ENCODE measurements at regions of chr15 and their contacts with region 1.

Region 1: DNA sequence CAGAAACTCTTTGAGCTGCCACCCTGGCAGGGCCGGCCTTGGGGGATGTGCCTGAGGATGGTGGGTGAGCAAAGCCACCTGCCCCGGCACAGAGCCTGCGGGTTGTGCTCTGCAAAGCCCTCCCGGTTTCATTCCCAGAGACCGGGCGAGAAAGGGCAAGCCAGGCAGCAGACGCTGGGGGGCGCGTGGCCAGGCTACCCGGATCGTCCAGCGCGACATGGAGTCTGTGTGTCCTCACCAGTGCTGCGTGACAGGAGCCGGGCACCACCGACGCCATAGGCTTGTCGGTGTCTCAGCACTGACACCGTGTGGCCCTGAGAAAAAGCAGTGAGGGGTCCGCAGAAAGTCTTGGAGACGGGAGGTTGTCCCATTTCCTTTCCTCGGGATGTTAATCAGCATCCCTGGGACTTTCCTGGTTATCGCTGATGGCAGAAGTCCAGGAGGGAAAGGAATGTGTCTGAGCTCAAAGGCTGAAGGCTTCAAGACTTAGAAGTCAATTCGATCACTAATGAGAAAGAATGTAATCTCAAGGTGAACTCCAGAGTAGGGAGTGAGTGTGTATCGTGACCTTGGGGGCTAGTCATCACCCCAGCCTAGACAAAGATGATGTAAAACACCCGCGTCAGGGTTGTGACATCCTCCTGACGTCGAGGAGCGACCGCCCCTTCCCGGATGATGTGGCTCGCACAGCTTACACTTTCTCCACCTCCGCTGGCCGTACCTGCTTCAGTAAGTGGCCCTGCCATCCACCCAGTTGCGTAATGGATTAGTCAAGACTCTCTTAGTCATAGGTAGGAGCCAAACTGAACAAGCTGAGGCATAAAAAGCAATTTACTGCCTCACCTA is 36.3 kb upstream of the PLA2G4E start:
- DNase-seq: peak; percentile 77 to 90
- H3K4me3 ChIP-seq: peak overlapping the region; percentile 4 to 50 (median 26); a peak in 5 of 8 replicates
- H3K27ac ChIP-seq: no peak overlapping the region
- H3K4me1 ChIP-seq: no peaks in the 10 kb centered on the region
- H3K27me3 ChIP-seq: no peaks in the 10 kb centered on the region; a peak in 1 of 7 replicates
- CTCF ChIP-seq: peak; percentile 59 to 88 (median 85)
- EP300 ChIP-seq: peak in 1 of 2 experiments; percentile 37; a peak in 1 of 3 replicates
- POLR2A ChIP-seq: no peak
- RAD21 ChIP-seq: peak; percentile 74 to 82

Region 2: DNA sequence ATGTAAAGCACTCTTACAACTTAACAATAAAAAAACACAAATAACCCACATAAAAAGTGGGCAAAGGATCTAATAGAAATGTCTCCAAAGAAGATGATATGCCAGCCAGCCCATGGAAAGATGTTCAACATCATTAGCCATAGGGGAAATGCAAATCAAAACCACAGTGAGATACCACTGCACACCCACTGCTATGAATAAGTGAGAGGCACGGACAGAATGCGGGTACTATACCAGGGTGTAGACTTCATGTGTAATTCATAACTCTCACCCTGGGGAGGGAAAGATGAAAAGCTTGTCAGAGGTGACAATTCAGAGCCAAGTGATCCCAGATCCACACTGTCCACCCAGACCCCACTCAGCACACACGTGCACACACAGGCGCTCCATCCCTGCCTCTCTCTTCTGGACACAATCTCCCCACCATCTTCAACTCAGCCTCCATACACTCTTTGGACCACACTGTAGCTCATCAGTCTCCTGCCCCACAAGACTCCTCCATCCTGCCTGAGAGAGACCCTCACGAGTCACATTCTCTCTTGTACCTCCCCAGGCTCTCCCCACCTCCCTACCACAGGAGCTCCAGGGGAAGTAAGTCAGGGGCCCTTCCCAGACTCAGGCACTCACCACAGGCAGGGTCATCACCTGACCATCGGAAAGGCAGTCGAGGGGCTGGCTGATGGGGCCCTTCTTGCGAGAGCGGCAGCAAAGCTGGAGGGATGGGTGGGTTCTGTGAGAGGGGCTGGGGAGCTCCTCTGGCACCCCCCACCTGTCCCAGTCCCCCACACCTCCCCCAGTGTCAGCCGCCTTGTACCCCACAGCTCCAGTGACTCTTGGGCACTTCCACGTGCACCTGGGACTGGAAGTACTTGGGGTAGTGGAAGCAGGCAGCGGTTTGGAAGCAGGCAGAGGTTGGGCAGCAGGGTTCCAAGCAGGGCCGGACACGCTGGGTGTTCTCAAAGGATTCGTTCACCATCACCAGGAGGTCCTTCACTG is 57.6 kb before region 1 on chr15:
- CTCF ChIA-PET with region 1: interaction called, 185 read pairs
- POLR2A ChIA-PET with region 1: no interaction called
- DNase-seq: no peak
- H3K4me3 ChIP-seq: no peak overlapping the region
- H3K27ac ChIP-seq: no peak overlapping the region
- H3K4me1 ChIP-seq: no peaks in the 10 kb centered on the region
- H3K27me3 ChIP-seq: no peaks in the 10 kb centered on the region
- CTCF ChIP-seq: no peak
- EP300 ChIP-seq: no peak
- POLR2A ChIP-seq: no peak
- RAD21 ChIP-seq: no peak

Region 3: GRCh38 chr15:42010434-42010833 is 46.7 kb before region 1 on chr15:
- CTCF ChIA-PET with region 1: interaction called, 11 read pairs
- POLR2A ChIA-PET with region 1: no interaction called
- DNase-seq: no peak
- H3K4me3 ChIP-seq: no peak overlapping the region
- H3K27ac ChIP-seq: no peak overlapping the region
- H3K4me1 ChIP-seq: no peaks in the 10 kb centered on the region
- H3K27me3 ChIP-seq: no peaks in the 10 kb centered on the region; a peak in 2 of 7 replicates
- CTCF ChIP-seq: no peak
- EP300 ChIP-seq: no peak
- POLR2A ChIP-seq: no peak
- RAD21 ChIP-seq: no peak

Region 4: GRCh38 chr15:42072141-42072685 is 15.1 kb after region 1 on chr15:
- CTCF ChIA-PET with region 1: interaction called, 425 read pairs
- POLR2A ChIA-PET with region 1: no interaction called
- DNase-seq: no peak
- H3K4me3 ChIP-seq: no peak overlapping the region
- H3K27ac ChIP-seq: no peak overlapping the region
- H3K4me1 ChIP-seq: no peaks in the 10 kb centered on the region
- H3K27me3 ChIP-seq: no peaks in the 10 kb centered on the region
- CTCF ChIP-seq: no peak
- EP300 ChIP-seq: no peak
- POLR2A ChIP-seq: no peak
- RAD21 ChIP-seq: no peak

Region 5: GRCh38 chr15:42371125-42371524 is 314.0 kb after region 1 on chr15:
- CTCF ChIA-PET with region 1: no interaction called
- POLR2A ChIA-PET with region 1: no interaction called
- DNase-seq: no peak
- H3K4me3 ChIP-seq: no peak overlapping the region
- H3K27ac ChIP-seq: no peak overlapping the region
- H3K4me1 ChIP-seq: no peaks in the 10 kb centered on the region
- H3K27me3 ChIP-seq: 0 out of 7 replicates have a peak, but pooled peaks cover 0 to 2% (median 0%) of the 10 kb centered on the region in 4 experiments
- CTCF ChIP-seq: no peak
- EP300 ChIP-seq: no peak
- POLR2A ChIP-seq: no peak
- RAD21 ChIP-seq: peak; percentile 29 to 39; a peak in 3 of 4 replicates